ENCODE measurements at regions of chr5 and their contacts with region 1.

Region 1: DNA sequence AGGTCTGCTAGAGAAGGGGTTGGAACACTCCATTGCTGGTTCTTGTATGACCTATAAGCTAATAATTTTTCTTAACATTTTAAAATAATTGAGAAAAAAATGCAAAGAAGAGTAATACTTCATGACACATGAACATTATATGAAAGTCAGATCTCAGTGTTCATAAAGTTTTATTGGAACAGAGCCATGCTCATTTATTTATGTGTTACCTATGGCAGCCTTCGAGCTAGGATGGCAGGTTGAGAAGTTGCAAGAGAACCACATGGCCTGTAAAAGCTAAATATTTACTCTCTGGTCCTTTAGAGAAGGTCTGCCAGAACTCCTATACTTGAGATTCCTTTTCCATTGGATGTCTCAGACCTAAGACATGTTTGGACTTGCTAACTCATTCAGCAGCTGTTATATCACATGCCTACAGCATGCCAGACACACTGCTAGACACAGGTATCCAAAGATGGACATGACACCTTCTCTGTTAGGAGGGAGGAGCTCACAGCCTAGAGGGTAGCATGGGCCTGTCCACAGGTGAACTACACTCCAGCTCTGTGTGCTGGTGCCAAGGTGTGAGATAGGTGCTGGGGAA is 304.3 kb downstream of the ARHGAP26 start:
- DNase-seq: no peak
- CTCF ChIP-seq: no peak

Region 2: GRCh38 chr5:143063175-143063970 is 11.1 kb before region 1 on chr5:
- CTCF ChIA-PET with region 1: interaction called, 16 read pairs
- POLR2A ChIA-PET with region 1: interaction called, 3 read pairs
- DNase-seq: no peak
- CTCF ChIP-seq: no peak

Region 3: GRCh38 chr5:143086908-143087637 is 12.6 kb after region 1 on chr5:
- CTCF ChIA-PET with region 1: interaction called, 13 read pairs
- POLR2A ChIA-PET with region 1: no interaction called
- DNase-seq: no peak
- CTCF ChIP-seq: no peak